ENCODE measurements at regions of chr12 and their contacts with region 1.

Region 1: GRCh38 chr12:124036674-124037109 is 63.7 kb downstream of the ZNF664 start:
- DNase-seq: peak; percentile 21
- ATAC-seq: peak; percentile 54
- H3K4me3 Mint-ChIP-seq: no peak overlapping the region
- H3K27ac Mint-ChIP-seq: no peak overlapping the region
- H3K4me1 Mint-ChIP-seq: no peaks in the 10 kb centered on the region
- H3K27me3 Mint-ChIP-seq: peaks cover 5% of the 10 kb centered on the region
- CTCF ChIP-seq: peak; percentile 96

Region 2: GRCh38 chr12:123905319-123905925 is 131.3 kb before region 1 on chr12:
- CTCF ChIA-PET with region 1: interaction called, 13 read pairs
- POLR2A ChIA-PET with region 1: no interaction called
- intact Hi-C with region 1: loop called (anchors 1 kb)
- DNase-seq: no peak
- ATAC-seq: peak; percentile 64
- H3K4me3 Mint-ChIP-seq: no peak overlapping the region
- H3K27ac Mint-ChIP-seq: peak overlapping the region; percentile 43
- H3K4me1 Mint-ChIP-seq: peaks cover 5% of the 10 kb centered on the region
- H3K27me3 Mint-ChIP-seq: peaks cover 14% of the 10 kb centered on the region
- CTCF ChIP-seq: peak; percentile 33

Region 3: DNA sequence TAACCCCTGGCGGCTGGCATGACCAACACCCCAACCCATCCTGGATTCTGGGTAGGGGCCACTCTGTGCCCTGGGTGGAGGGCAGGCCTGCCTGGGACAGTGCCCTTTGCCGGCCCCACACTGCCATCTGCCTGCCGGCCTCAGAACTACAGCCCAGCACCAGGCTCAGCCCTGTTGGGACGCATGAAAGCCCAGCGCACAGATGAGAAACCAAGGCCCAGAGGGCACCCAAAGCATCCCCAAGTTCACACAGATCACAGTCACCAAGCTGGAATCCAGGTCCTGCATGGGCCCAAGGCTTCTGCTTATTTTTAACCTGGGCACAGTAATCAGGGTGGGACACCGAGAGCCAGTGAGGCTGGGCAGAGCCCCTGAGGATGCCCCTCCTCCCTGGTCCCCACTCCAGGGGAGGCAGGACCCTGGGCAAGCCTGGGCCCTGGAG is 284.4 kb after region 1 on chr12:
- CTCF ChIA-PET with region 1: no interaction called
- POLR2A ChIA-PET with region 1: no interaction called
- intact Hi-C with region 1: loop called (anchors 1 kb)
- DNase-seq: peak; percentile 51
- ATAC-seq: peak; percentile 92
- H3K4me3 Mint-ChIP-seq: no peak overlapping the region
- H3K27ac Mint-ChIP-seq: no peak overlapping the region
- H3K4me1 Mint-ChIP-seq: no peaks in the 10 kb centered on the region
- H3K27me3 Mint-ChIP-seq: no peaks in the 10 kb centered on the region
- CTCF ChIP-seq: no peak

Region 4: DNA sequence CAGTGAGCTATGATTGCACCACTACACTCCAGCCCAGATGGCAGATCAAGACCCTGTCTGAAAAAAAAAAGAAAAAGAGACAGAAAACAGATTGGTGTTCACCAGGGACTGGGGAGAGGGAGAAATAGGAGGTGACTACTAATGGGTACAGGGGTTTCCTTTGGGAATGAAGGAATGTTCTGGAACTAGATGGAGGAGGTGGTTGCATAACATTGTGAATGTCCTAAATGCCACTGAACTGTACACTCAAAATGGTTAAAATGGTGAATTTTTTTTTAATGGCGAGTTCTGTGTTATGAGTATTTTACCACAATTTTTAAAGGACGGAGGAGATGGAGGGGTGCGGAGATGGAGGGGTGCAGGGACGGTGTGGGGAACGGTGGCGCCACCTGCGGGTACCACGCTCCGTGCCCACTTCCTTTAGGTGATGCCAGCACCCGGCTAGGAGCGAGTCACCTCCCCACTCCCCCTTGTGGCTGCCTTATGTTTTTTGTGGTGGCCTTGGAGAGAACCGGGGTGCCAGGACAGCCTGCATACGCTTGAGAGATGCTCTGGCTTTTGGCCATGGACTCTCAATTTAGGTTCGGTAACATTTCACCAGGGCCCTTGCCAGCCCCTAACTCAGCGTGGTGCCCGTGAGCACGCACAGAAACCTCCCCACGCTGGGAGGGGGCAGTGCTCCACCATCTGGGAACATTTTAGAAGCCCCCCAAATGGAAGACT is 861.7 kb after region 1 on chr12:
- CTCF ChIA-PET with region 1: interaction called, 4 read pairs
- POLR2A ChIA-PET with region 1: no interaction called
- intact Hi-C with region 1: loop called (anchors 1 kb)
- DNase-seq: peak; percentile 55
- ATAC-seq: peak; percentile 81
- H3K4me3 Mint-ChIP-seq: peak overlapping the region; percentile 29
- H3K27ac Mint-ChIP-seq: no peak overlapping the region
- H3K4me1 Mint-ChIP-seq: peaks cover 45% of the 10 kb centered on the region
- H3K27me3 Mint-ChIP-seq: no peaks in the 10 kb centered on the region
- CTCF ChIP-seq: peak; percentile 33

Region 5: DNA sequence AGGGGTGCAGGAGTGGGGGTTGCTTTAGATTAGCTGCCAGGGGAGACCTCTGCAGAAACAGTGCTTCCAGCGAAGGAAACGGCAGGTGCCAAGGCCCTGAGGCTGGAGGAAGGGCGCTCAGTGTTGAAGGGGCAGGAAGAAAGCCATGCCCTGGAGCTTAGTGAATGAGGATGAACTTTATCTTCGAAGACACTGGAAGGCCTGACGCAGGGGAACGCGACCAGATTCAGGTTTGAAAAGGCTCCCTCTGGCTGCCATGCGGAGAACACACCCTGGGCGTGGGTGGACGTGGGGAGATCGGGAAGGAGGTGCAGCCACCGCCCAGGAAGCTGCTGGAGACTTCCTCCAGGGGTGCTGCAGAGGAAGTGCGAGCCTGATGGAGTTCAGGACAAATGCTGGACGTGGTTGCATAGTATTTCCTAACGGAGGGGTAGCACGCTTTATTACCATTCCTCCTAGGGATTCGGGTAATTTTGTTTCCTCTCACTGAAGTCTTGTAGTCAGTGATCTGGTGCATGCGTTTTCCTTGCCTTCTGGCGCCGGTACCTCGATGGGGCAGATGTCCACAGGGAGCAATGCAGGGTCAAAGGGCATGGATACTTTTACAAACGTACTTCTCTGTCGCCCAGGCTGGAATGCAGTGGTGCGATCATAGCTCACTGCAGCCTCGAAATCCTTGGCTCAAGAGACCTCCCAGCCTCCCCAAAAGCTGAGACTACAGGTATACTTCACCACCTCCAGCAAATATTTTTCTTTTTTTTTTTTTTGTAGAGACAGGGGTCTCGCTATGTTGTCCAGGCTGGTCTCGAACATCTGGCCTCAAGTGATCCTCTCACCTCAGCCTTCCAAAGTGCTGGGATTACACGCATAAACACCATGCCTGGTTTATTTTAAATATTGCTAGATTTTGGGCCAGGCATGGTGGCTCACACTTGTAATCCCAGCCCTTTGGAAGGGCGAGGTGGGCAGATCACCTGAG is 904.1 kb after region 1 on chr12:
- CTCF ChIA-PET with region 1: interaction called, 4 read pairs
- POLR2A ChIA-PET with region 1: no interaction called
- intact Hi-C with region 1: loop called (anchors 1 kb)
- DNase-seq: peak; percentile 62
- ATAC-seq: peak; percentile 60
- H3K4me3 Mint-ChIP-seq: no peak overlapping the region
- H3K27ac Mint-ChIP-seq: no peak overlapping the region
- H3K4me1 Mint-ChIP-seq: peaks cover 15% of the 10 kb centered on the region
- H3K27me3 Mint-ChIP-seq: no peaks in the 10 kb centered on the region
- CTCF ChIP-seq: no peak

Measured in activated B cell treated with CpG ODN at 0.5 μM for 24 hours (primary cell).